ENCODE measurements at regions of chr2 and their contacts with region 1.

Region 1: DNA sequence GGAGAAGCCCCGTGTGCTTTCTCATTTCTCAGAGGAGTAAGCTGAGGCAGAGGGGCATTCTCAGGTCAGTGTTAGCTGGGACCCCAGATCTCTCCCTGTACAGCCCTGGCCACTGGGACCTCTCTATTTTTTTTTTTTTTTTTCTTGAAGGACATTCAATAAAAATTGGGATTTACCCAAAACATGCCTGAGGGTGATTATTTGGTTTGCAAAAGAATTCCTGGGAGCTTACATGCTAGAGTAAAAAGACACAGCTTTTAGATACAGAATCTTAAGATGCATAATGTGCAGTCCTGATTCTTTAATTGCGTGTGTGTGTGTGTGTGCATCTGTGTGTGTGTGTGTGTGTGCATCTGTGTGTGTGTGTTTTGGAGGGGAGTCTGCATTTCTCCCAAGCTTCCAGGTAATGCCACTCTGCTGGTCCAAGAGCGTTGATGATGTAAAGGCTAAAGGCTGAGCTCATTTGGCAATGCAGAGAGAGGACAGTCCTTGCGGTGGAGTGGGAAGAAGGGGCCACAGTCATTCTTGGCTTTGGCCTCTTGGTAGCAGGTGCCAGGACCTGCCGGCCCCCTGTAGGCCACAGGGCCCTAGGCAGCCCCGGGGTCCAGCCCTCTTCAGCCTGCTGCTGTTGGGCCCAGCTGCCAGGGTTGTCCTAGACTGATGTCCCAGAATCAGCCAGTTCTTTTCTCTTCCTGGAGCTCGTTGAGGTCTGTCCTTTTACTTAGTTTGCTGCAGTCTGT is 74.1 kb upstream of the MCFD2 start:
- DNase-seq: no peak
- H3K4me3 ChIP-seq: no peak overlapping the region
- H3K27ac ChIP-seq: no peak overlapping the region
- H3K4me1 ChIP-seq: peaks cover 32% of the 10 kb centered on the region
- H3K27me3 ChIP-seq: no peaks in the 10 kb centered on the region

Region 2: DNA sequence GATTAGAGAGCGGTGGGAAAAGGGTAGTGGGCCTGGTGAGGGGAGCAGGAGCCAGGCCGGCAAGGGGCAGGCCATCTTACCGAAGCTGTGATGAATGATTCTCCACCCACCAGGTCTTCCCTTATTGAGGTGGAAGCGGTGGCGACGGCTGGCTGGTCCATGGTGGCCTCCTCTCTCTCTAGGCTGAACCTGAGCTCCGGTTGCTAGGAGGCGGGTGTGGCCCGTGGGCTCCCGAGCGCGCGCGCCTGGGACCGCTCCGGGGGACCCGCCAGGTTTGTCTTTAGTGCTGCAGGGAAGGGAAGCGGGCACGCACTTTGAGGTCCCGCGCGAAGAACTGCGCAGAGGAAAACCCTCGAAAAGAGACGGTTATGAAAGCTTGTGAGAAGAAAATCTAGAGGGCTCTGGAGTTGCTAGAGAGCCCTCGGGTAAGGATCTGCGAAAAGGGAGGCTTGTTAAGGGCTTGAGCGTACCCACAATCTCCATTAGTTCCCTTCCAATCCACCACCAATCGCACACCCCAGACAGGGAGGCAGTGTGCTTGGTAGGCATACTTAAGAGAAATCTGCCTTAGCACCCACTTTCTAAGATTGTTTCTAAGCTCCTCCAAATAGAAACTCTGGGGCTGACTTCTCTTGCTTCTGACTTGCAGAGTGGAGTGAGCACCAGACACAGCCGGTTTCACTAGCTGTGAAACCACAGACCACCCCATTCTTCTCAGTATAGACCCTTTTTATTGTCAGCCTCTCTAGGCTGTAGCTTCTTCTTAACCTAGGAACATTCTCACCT is 165.6 kb after region 1 on chr2 and contains the start of gene STPG4:
- in situ Hi-C with region 1: loop called (anchors 10 kb)
- DNase-seq: no peak
- H3K4me3 ChIP-seq: no peak within 1 kb of the TSS
- H3K27ac ChIP-seq: peak within 1 kb of the TSS; percentile 24
- H3K4me1 ChIP-seq: no peaks in the 10 kb centered on the region
- H3K27me3 ChIP-seq: no peaks in the 10 kb centered on the region
- total RNA-seq, gene STPG4: not detected in 2 replicates

Region 3: GRCh38 chr2:47309952-47310800 is 320.5 kb after region 1 on chr2:
- in situ Hi-C with region 1: loop called (anchors 10 kb)
- DNase-seq: peak; percentile 46
- H3K4me3 ChIP-seq: no peak overlapping the region
- H3K27ac ChIP-seq: no peak overlapping the region
- H3K4me1 ChIP-seq: no peaks in the 10 kb centered on the region
- H3K27me3 ChIP-seq: no peaks in the 10 kb centered on the region

Measured in GM23248 (cell line).